ENCODE measurements at regions of chr15 and their contacts with region 1.

Region 1: GRCh38 chr15:35751413-35752133 is 205.6 kb upstream of the DPH6 start:
- DNase-seq: peak in 1 of 2 donors; percentile 78
- H3K4me3 ChIP-seq: no peak overlapping the region
- H3K27ac ChIP-seq: peak overlapping the region; percentile 15 to 46
- H3K4me1 ChIP-seq: peaks cover 0 to 21% of the 10 kb centered on the region in 2 donors
- H3K27me3 ChIP-seq: no peaks in the 10 kb centered on the region
- CTCF ChIP-seq: peak; percentile 53 to 81 (median 69)

Region 2: DNA sequence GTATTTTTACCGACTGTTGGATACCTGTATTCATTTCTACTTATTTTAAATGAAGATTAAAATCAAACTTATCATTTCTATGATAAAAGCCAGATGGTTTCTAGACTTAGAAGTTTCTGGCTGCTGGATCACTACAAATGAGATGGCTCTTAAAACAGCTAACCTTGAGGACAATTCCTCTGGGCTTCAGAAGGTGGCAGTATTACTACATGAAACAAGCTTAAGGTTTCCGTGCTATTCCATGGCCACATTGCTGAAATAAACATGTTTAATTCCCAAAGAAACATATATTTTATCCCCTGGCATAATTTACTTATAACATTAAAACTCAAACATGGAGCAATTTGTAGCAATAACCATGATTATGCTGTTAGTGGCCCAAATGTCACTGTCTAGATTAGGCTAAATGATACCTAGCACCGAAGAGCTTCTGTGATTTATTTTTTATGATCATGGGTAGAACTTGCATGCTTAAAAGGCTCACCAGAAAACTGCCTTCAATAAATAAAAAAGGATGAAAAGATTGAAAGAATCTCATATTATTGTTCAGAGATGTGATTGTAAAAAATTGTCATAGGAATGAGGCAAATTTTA is 462.5 kb before region 1 on chr15:
- intact Hi-C with region 1: loop called (anchors 10 kb)
- DNase-seq: no peak
- H3K4me3 ChIP-seq: no peak overlapping the region
- H3K27ac ChIP-seq: no peak overlapping the region
- H3K4me1 ChIP-seq: peaks cover 0 to 2% of the 10 kb centered on the region in 2 donors
- H3K27me3 ChIP-seq: no peaks in the 10 kb centered on the region
- CTCF ChIP-seq: peak; percentile 39 to 78 (median 60)

Region 3: DNA sequence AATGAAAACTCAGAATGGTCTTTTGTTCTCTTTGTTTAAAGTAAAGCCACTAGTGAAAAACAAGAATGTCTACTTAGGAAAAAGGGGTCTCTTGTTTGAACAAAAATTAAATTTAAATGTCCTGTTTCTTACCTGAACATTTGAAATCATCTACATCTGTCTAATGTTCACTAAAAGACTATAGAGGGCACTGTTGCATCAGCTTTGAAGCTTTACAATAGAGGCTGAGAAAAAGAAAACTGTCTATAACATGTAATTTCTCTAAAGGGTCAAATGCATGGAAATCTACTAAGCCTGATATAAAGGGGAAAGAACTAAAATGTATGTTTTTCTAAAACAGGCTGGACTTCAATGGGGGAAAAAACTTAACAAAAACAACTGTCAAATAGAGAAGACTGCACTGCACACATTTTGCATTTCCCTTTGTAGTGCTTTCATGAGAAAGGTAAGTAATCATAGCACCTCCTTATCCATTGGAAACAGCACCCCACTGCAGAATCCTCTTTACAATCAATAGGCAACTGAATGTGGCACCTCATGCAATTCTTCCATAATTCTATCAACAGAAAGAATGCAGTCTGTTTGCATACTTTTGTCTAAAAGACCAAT is 231.9 kb before region 1 on chr15:
- intact Hi-C with region 1: loop called (anchors 5 kb)
- DNase-seq: no peak
- H3K4me3 ChIP-seq: no peak overlapping the region
- H3K27ac ChIP-seq: peak overlapping the region in 1 of 2 donors; percentile 42
- H3K4me1 ChIP-seq: no peaks in the 10 kb centered on the region
- H3K27me3 ChIP-seq: no peaks in the 10 kb centered on the region
- CTCF ChIP-seq: peak; percentile 51 to 69 (median 59)

Region 4: DNA sequence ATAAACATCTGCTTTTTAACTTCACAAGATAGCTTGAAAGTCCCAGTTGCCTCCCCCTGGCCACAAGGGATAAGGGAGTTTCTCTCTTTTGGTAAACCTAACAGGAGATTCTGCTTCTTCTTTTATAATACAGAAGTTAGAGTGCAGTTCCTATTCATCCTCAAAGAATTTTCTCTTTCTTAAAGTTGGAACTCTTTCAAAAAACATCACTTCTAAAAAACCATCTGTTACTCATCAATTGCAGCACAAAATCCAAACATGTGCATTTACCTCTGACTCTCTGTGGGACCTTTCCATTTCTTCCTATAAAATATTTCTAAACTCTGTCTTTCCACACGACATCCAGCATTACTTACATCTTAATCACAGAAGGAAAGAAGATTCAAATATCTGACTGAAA is 210.7 kb before region 1 on chr15:
- intact Hi-C with region 1: loop called (anchors 5 kb)
- DNase-seq: no peak
- H3K4me3 ChIP-seq: no peak overlapping the region
- H3K27ac ChIP-seq: peak overlapping the region in 1 of 2 donors; percentile 29
- H3K4me1 ChIP-seq: peaks cover 0 to 8% of the 10 kb centered on the region in 2 donors
- H3K27me3 ChIP-seq: no peaks in the 10 kb centered on the region
- CTCF ChIP-seq: no peak

Region 5: DNA sequence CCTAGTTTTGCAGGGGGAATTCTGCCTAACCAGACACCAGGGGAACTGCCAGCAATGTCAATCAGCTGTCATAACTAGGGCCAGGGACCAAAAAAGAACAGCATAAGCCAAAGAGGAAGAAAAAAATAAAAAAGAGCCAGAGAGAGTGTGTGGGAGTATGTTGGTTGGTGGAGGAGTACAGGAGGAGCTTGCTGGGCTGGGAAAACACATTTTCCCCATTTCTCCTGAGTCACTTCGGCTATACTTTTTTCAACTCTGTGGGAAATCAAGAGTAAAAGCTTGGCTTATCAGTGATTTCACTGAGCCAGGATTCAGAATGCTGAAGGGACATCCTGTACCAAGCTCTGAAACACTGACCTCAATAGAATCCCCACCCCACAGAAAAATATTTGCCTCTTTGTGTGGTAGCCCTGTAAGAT is 60.9 kb before region 1 on chr15:
- intact Hi-C with region 1: loop called (anchors 5 kb)
- DNase-seq: peak in 1 of 2 donors; percentile 79
- H3K4me3 ChIP-seq: no peak overlapping the region
- H3K27ac ChIP-seq: peak overlapping the region; percentile 82 to 88
- H3K4me1 ChIP-seq: peaks cover 9 to 34% of the 10 kb centered on the region in 2 donors
- H3K27me3 ChIP-seq: no peaks in the 10 kb centered on the region
- CTCF ChIP-seq: no peak

Region 6: DNA sequence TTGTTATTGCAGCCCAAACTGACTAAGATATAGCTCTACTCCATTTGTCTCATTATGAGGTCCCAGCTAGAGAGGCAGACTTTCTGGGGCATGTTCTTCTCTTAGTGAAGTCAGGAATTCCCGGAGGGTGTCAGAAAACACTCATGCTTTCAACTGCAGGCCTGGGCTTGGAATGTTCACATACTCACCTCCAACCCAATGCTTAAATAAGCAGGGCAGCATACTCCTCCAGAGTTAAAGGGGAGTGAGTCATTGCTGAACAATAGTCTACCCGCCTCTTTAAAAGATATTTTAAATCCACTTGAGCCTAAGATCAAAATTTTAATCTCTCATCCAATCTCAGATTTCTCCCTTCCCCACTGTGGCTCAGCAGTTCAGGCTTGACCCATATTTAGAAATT is 37.8 kb before region 1 on chr15:
- intact Hi-C with region 1: no loop called
- DNase-seq: no peak
- H3K4me3 ChIP-seq: no peak overlapping the region
- H3K27ac ChIP-seq: no peak overlapping the region
- H3K4me1 ChIP-seq: no peaks in the 10 kb centered on the region
- H3K27me3 ChIP-seq: no peaks in the 10 kb centered on the region
- CTCF ChIP-seq: no peak

Region 7: DNA sequence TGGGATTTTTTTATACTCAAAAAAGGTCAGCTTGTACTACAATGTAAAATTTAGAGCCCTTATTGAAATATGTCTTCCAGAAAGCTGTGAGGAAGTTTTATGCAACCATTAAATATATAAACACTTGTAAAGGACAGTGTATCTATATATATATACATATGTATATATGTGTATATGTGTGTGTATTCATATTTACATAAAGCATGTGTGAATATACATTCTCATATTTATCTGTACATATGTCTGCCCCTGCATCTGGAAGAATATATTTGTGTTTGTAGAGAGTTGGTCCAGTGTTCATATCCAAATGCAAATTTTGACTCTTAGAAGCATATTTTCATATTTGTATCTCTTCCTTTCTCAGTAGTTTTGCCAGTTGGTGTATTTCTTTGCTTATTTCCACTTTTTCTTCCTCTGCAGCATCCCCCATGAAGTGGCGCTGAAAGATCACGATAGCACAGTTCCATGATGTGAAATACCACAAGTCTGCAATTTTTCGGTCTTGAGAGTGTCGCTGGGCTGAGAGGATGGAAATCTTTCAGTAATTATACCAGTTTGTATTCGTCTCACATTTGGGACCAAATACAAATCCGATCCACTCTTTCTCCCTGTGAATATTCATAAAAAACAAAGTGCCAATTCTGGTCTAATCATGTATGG is 106.1 kb after region 1 on chr15:
- intact Hi-C with region 1: no loop called
- DNase-seq: no peak
- H3K4me3 ChIP-seq: no peak overlapping the region
- H3K27ac ChIP-seq: no peak overlapping the region
- H3K4me1 ChIP-seq: no peaks in the 10 kb centered on the region
- H3K27me3 ChIP-seq: no peaks in the 10 kb centered on the region
- CTCF ChIP-seq: no peak

Region 8: DNA sequence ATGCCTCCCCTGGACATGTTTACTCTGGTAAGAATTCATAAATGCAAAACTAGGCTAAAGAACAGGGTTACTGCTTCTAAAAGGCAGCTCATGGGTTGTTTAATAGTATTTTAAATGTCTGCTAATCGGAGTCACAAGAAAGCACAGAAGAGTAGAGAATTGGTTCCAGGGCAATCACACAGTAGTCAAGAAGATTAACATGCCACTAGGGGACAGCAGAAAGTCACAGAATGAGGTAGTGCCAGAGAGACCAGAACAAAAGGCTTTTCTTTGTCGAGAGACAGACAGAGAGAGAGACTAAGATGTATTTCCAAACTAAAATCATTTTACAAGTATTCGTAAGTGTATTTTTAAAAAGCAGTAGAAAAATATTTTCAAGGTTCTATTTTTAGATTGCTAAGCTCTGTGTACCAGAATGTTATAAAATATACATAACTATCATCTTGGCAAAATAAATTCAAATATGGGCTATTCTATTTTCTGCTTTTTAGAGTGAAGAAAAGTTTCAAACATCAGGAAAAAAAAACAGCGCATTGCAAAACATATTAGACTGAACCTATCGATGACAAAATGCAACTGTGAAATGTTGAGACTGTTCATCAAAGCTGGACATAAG is 749.6 kb after region 1 on chr15:
- intact Hi-C with region 1: loop called (anchors 5 kb)
- DNase-seq: no peak
- H3K4me3 ChIP-seq: no peak overlapping the region
- H3K27ac ChIP-seq: no peak overlapping the region
- H3K4me1 ChIP-seq: peaks cover 0 to 12% of the 10 kb centered on the region in 2 donors
- H3K27me3 ChIP-seq: no peaks in the 10 kb centered on the region
- CTCF ChIP-seq: peak; percentile 7 to 80 (median 76)

Region 9: DNA sequence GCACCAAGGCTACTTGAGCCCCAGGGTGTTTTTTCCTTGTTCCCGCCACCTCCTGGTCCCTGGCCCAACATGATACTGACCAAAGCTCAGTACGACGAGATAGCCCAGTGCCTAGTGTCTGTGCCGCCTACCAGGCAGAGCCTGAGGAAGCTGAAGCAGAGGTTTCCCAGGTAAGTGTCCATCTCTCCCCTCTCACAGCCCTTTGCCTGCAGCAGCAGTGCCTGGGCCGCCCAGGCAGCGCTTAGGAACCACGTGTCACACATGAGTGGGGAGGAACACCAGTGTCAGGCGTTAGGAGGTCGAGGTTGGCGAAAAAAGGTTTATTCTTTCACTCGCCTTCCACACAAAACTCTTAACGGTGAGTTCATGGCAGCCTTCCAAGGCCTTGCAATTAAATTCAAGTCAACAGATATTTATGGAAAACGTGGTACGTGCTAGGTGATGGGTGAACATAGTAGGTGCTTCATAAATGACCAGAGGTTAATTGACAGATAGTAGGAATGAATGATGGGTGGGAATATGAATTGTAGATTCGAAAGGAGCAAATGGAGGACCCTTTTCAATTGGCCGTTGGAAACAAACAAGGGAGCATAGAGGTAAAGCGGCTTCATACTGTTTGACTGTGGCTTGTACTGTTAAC is 828.3 kb after region 1 on chr15:
- intact Hi-C with region 1: loop called (anchors 10 kb)
- DNase-seq: no peak
- H3K4me3 ChIP-seq: peak overlapping the region; percentile 74 to 76
- H3K27ac ChIP-seq: peak overlapping the region; percentile 72 to 85
- H3K4me1 ChIP-seq: peaks cover 0 to 3% of the 10 kb centered on the region in 2 donors
- H3K27me3 ChIP-seq: no peaks in the 10 kb centered on the region
- CTCF ChIP-seq: no peak